ENCODE measurements at regions of chr15 and their contacts with region 1.

Region 1: GRCh38 chr15:40108855-40109735 is at the start of gene BMF:
- DNase-seq: peak; percentile 99
- H3K4me3 ChIP-seq: peak within 1 kb of the TSS; percentile 83
- CTCF ChIP-seq: peak; percentile 47

Region 2: GRCh38 chr15:40044717-40045571 is 64.2 kb before region 1 on chr15:
- in situ Hi-C with region 1: loop called (anchors 5 kb)
- DNase-seq: no peak
- H3K4me3 ChIP-seq: peak overlapping the region; percentile 6
- CTCF ChIP-seq: peak; percentile 87

Region 3: GRCh38 chr15:40150163-40150925 is 41.2 kb after region 1 on chr15:
- in situ Hi-C with region 1: loop called (anchors 10 kb)
- DNase-seq: peak; percentile 45
- H3K4me3 ChIP-seq: no peak overlapping the region
- CTCF ChIP-seq: no peak